CD8-positive, alpha-beta T cell (primary cell): ENCODE measurements at regions of chr12 and their contacts with region 1.

Region 1: DNA sequence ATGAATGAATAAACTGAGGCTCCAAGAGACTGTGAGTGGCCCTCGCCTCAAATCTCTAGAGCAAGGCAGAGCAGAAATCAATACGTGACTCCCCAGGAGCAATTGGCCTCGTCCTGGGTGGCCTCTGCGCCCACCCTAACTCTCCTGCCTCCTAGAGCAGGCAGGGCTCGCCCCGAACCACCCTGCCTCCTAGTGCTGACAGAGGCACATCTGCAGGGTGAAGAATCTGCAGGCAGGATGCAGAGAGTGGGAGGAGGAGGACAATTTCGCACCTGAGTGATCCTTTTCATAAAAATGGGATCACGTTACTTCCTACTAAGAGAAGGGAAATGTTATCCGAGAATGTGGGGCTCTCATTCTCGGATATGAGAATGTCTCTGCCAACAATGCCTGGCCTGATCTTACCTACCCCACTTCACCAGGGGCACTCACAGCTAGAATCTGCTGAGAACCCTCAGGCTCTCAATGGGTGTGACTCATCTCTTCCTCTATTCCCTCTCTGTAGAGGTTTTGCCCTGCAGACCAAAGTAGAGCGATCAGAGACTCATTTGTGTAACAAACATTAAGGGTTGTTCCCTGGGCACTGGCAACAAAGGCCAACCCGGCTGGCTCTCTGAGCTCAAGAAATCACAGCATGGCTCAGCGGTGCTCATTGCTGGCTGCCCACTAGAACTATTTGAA is 61.7 kb upstream of the BCL2L14 start:
- DNase-seq: peak in 7 of 9 experiments; percentile 15 to 71 (median 52)
- ATAC-seq: peak; percentile 66
- H3K4me3 ChIP-seq: no peak overlapping the region
- H3K4me3 Mint-ChIP-seq: peak overlapping the region; percentile 79
- H3K27ac ChIP-seq: no peak overlapping the region
- H3K27ac Mint-ChIP-seq: peak overlapping the region; percentile 88
- H3K4me1 ChIP-seq: peaks cover 48% of the 10 kb centered on the region
- H3K4me1 Mint-ChIP-seq: peaks cover 62% of the 10 kb centered on the region
- H3K27me3 ChIP-seq: peaks cover 0 to 9% of the 10 kb centered on the region in 2 experiments
- H3K27me3 Mint-ChIP-seq: no peaks in the 10 kb centered on the region
- CTCF ChIP-seq: peak; percentile 10

Region 2: GRCh38 chr12:11273449-11273848 is 735.6 kb before region 1 on chr12:
- CTCF ChIA-PET with region 1: no interaction called
- POLR2A ChIA-PET with region 1: no interaction called
- intact Hi-C with region 1: no loop called
- DNase-seq: no peak
- ATAC-seq: no peak
- H3K4me3 ChIP-seq: no peak overlapping the region
- H3K4me3 Mint-ChIP-seq: no peak overlapping the region
- H3K27ac ChIP-seq: no peak overlapping the region
- H3K27ac Mint-ChIP-seq: no peak overlapping the region
- H3K4me1 ChIP-seq: no peaks in the 10 kb centered on the region
- H3K4me1 Mint-ChIP-seq: no peaks in the 10 kb centered on the region
- H3K27me3 ChIP-seq: no peaks in the 10 kb centered on the region
- H3K27me3 Mint-ChIP-seq: no peaks in the 10 kb centered on the region
- CTCF ChIP-seq: no peak

Region 3: DNA sequence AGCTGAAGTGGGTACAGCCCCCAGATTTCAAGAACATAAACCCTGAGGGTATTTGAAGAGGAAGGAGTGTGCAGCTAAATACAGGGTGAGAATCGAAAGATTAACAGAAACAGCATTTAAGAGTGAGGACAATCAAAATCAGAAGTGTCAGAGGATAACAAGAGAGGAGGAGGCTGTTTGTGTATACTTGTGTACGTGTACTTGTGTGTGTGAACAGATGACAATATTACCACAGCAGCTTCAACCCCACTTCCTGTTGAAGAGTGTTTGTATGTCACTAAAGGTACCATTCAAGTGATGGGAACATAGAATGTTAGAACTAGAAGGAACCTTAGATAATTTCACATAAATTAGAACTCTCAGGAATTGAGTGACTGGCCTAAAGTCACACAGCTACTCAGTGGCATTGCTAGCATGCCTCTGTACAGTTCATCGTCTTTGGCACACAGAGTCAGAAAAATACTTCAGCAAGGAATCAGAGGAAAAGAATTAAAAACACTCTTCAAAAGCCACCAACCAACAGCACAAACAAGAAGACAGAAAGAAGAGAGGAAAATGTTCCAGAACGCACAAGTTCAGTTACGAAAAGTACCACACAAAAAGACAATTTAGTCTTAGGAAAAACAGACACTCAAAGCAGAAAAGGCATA is 102.7 kb before region 1 on chr12:
- CTCF ChIA-PET with region 1: no interaction called
- POLR2A ChIA-PET with region 1: no interaction called
- intact Hi-C with region 1: loop called in 1 of 2 experiments (anchors 10 kb)
- DNase-seq: no peak
- ATAC-seq: no peak
- H3K4me3 ChIP-seq: no peak overlapping the region
- H3K4me3 Mint-ChIP-seq: no peak overlapping the region
- H3K27ac ChIP-seq: no peak overlapping the region
- H3K27ac Mint-ChIP-seq: no peak overlapping the region
- H3K4me1 ChIP-seq: no peaks in the 10 kb centered on the region
- H3K4me1 Mint-ChIP-seq: peaks cover 21% of the 10 kb centered on the region
- H3K27me3 ChIP-seq: no peaks in the 10 kb centered on the region
- H3K27me3 Mint-ChIP-seq: no peaks in the 10 kb centered on the region
- CTCF ChIP-seq: no peak

Region 4: GRCh38 chr12:11927286-11927935 is 81.7 kb before region 1 on chr12:
- CTCF ChIA-PET with region 1: no interaction called
- POLR2A ChIA-PET with region 1: no interaction called
- intact Hi-C with region 1: no loop called
- DNase-seq: no peak
- ATAC-seq: no peak
- H3K4me3 ChIP-seq: no peak overlapping the region
- H3K4me3 Mint-ChIP-seq: no peak overlapping the region
- H3K27ac ChIP-seq: no peak overlapping the region
- H3K27ac Mint-ChIP-seq: no peak overlapping the region
- H3K4me1 ChIP-seq: no peaks in the 10 kb centered on the region
- H3K4me1 Mint-ChIP-seq: no peaks in the 10 kb centered on the region
- H3K27me3 ChIP-seq: no peaks in the 10 kb centered on the region
- H3K27me3 Mint-ChIP-seq: no peaks in the 10 kb centered on the region
- CTCF ChIP-seq: no peak

Region 5: DNA sequence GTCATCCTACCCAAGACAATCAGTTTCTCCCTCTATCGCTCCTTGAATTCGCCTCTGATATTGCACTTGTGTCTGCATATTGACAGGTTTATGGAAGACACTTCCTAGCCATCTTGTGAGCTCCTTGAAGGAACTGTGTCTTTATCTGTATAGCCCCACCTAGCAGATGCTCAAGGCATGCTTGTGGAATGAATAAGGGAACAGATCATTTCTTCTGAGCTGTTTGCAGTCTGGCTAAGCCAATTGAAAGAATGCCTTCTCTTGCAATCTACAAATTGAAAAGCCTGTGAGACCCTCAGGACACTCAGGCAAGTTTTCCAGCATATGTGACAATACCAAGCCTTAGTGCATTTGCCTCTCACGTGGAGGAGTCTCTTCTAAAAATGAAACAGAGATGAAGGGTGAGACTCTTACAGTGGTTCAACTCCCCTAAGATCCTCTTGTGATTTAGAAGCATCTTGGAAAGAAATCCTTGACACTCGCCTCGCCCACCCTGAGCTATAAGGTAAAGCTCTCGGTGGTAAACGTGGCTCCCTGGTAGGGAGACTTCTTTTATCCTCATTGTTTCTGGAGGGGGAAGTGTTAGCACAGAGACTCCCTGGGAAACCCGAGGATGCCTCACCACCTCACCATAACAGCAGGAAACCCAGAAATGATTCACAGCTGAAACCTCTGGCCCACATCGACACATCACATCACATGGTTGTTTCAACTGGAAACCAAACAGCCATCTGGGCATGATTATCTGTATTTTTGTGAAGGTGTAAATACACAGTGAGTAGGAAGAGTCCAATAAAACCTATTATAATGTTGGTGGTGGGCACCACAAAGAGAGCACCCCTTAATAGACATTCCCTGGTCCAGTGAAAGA is 50.6 kb before region 1 on chr12:
- CTCF ChIA-PET with region 1: no interaction called
- POLR2A ChIA-PET with region 1: no interaction called
- intact Hi-C with region 1: loop called (anchors 10 kb)
- DNase-seq: peak in 5 of 9 experiments; percentile 11 to 43 (median 33)
- ATAC-seq: peak; percentile 31
- H3K4me3 ChIP-seq: no peak overlapping the region
- H3K4me3 Mint-ChIP-seq: no peak overlapping the region
- H3K27ac ChIP-seq: no peak overlapping the region
- H3K27ac Mint-ChIP-seq: no peak overlapping the region
- H3K4me1 ChIP-seq: no peaks in the 10 kb centered on the region
- H3K4me1 Mint-ChIP-seq: peaks cover 12% of the 10 kb centered on the region
- H3K27me3 ChIP-seq: no peaks in the 10 kb centered on the region
- H3K27me3 Mint-ChIP-seq: peaks cover 9% of the 10 kb centered on the region
- CTCF ChIP-seq: no peak

Region 6: GRCh38 chr12:11969437-11970154 is 39.5 kb before region 1 on chr12:
- CTCF ChIA-PET with region 1: no interaction called
- POLR2A ChIA-PET with region 1: no interaction called
- intact Hi-C with region 1: loop called in 1 of 2 experiments (anchors 10 kb)
- DNase-seq: no peak
- ATAC-seq: no peak
- H3K4me3 ChIP-seq: no peak overlapping the region
- H3K4me3 Mint-ChIP-seq: no peak overlapping the region
- H3K27ac ChIP-seq: no peak overlapping the region
- H3K27ac Mint-ChIP-seq: no peak overlapping the region
- H3K4me1 ChIP-seq: no peaks in the 10 kb centered on the region
- H3K4me1 Mint-ChIP-seq: peaks cover 2% of the 10 kb centered on the region
- H3K27me3 ChIP-seq: no peaks in the 10 kb centered on the region
- H3K27me3 Mint-ChIP-seq: no peaks in the 10 kb centered on the region
- CTCF ChIP-seq: no peak

Region 7: DNA sequence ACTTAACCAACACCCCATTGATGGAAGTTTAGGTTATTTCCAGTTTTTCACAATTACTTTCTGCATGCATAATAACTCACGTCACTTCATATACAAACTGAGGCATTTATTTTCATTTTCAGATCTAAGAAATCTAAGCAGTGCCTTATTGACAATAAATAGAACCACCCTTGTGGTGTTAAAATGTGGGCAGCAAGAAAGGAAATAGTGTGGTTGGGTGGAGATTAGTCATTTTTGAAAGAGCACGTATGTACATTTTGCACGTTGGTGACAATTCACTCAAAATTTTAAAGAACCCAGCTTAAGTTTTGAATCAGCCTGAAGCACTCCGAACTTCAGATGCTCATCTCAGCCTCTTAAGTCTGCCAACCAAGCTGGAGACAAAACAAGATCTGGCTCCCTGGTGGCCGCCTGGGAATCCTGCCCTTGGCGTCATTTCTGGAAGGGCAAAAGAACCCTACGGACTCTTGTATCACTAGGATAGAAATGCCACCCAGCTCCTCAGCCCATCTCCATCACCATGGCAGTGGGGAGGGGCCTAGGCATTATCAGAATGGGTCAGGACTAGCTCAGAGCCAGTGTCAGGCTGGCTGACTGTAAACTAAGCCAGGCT is 27.8 kb before region 1 on chr12:
- CTCF ChIA-PET with region 1: interaction called, 5 read pairs
- POLR2A ChIA-PET with region 1: interaction called, 10 read pairs
- intact Hi-C with region 1: loop called (anchors 1 kb)
- DNase-seq: peak in 8 of 9 experiments; percentile 9 to 92 (median 36)
- ATAC-seq: peak; percentile 86
- H3K4me3 ChIP-seq: peak overlapping the region in 1 of 2 experiments; percentile 13
- H3K4me3 Mint-ChIP-seq: peak overlapping the region; percentile 0
- H3K27ac ChIP-seq: peak overlapping the region in 1 of 2 experiments; percentile 69
- H3K27ac Mint-ChIP-seq: peak overlapping the region; percentile 86
- H3K4me1 ChIP-seq: peaks cover 24% of the 10 kb centered on the region
- H3K4me1 Mint-ChIP-seq: peaks cover 30% of the 10 kb centered on the region
- H3K27me3 ChIP-seq: no peaks in the 10 kb centered on the region
- H3K27me3 Mint-ChIP-seq: no peaks in the 10 kb centered on the region
- CTCF ChIP-seq: no peak

Region 8: DNA sequence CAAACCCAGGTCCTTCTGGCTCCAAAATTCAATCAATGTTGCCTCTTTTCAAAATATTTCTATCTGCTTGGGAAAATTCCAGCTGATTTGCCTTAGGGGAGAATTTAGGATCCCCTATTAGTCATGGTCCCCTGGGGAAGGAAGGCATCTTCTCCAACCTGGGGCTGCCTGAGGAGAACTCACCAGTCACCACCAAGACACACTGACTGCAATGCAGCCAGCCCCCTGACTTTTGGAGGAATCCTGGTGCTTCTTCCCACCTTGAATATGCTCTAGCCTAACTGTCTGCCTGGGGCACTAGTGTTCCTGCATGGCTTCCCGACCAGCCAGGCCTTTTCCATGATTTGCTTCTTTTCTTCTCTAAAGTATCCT is 10.1 kb before region 1 on chr12:
- CTCF ChIA-PET with region 1: interaction called, 15 read pairs
- POLR2A ChIA-PET with region 1: interaction called, 4 read pairs
- intact Hi-C with region 1: loop called in 1 of 2 experiments (anchors 1 kb)
- DNase-seq: no peak
- ATAC-seq: no peak
- H3K4me3 ChIP-seq: peak overlapping the region in 1 of 2 experiments; percentile 4
- H3K4me3 Mint-ChIP-seq: peak overlapping the region; percentile 5
- H3K27ac ChIP-seq: no peak overlapping the region
- H3K27ac Mint-ChIP-seq: peak overlapping the region; percentile 81
- H3K4me1 ChIP-seq: peaks cover 21% of the 10 kb centered on the region
- H3K4me1 Mint-ChIP-seq: peaks cover 29% of the 10 kb centered on the region
- H3K27me3 ChIP-seq: no peaks in the 10 kb centered on the region
- H3K27me3 Mint-ChIP-seq: no peaks in the 10 kb centered on the region
- CTCF ChIP-seq: no peak

Region 9: DNA sequence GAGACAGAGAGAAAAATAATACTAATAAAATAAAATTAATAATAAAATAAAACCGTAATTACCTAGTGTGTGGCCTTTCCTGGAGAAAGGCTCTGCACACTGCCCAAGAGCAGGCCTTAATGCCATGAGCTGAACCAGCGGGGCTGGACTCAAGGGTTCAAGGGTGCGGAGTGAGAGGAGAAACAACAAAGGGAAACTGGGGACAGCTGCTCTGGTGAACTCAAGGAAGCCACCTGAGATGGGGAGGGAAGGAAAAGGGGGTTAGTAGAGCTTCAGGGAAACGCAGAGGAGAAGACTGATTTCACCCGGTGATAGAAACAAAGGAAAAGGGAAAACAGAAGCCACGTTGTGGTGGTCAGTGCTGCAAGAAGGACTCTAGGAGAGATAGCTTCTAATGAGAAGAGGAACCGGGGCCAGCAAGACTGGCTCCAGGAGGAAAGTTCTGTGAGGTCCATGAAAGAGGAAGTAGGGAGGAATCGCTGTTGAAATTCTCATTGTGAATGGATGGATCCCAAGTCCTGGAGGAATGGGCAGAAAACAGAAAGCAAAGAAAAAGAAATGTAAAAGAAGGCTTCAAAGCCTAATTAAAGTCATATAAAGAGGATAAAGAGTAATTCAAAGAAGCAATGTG is 13.3 kb after region 1 on chr12:
- CTCF ChIA-PET with region 1: interaction called, 5 read pairs
- POLR2A ChIA-PET with region 1: no interaction called
- intact Hi-C with region 1: loop called (anchors 1 to 2 kb)
- DNase-seq: no peak
- ATAC-seq: no peak
- H3K4me3 ChIP-seq: no peak overlapping the region
- H3K4me3 Mint-ChIP-seq: no peak overlapping the region
- H3K27ac ChIP-seq: no peak overlapping the region
- H3K27ac Mint-ChIP-seq: no peak overlapping the region
- H3K4me1 ChIP-seq: peaks cover 4% of the 10 kb centered on the region
- H3K4me1 Mint-ChIP-seq: peaks cover 7% of the 10 kb centered on the region
- H3K27me3 ChIP-seq: no peaks in the 10 kb centered on the region
- H3K27me3 Mint-ChIP-seq: no peaks in the 10 kb centered on the region
- CTCF ChIP-seq: no peak

Region 10: GRCh38 chr12:12194206-12194605 is 185.1 kb after region 1 on chr12:
- CTCF ChIA-PET with region 1: no interaction called
- POLR2A ChIA-PET with region 1: no interaction called
- intact Hi-C with region 1: no loop called
- DNase-seq: no peak
- ATAC-seq: no peak
- H3K4me3 ChIP-seq: no peak overlapping the region
- H3K4me3 Mint-ChIP-seq: no peak overlapping the region
- H3K27ac ChIP-seq: no peak overlapping the region
- H3K27ac Mint-ChIP-seq: no peak overlapping the region
- H3K4me1 ChIP-seq: no peaks in the 10 kb centered on the region
- H3K4me1 Mint-ChIP-seq: no peaks in the 10 kb centered on the region
- H3K27me3 ChIP-seq: peaks cover 0 to 6% of the 10 kb centered on the region in 2 experiments
- H3K27me3 Mint-ChIP-seq: peaks cover 16% of the 10 kb centered on the region
- CTCF ChIP-seq: no peak